A673 (cell line): ENCODE measurements at regions of chrX and their contacts with region 1.

Region 1: GRCh38 chrX:9700555-9700954 is 65.1 kb downstream of the GPR143 start:
- DNase-seq: no peak
- H3K4me3 ChIP-seq: no peak overlapping the region
- H3K27ac ChIP-seq: no peak overlapping the region
- H3K4me1 ChIP-seq: no peaks in the 10 kb centered on the region
- H3K27me3 ChIP-seq: no peaks in the 10 kb centered on the region
- CTCF ChIP-seq: 0 out of 2 replicates have a peak, but pooled peaks have one; percentile 18

Region 2: DNA sequence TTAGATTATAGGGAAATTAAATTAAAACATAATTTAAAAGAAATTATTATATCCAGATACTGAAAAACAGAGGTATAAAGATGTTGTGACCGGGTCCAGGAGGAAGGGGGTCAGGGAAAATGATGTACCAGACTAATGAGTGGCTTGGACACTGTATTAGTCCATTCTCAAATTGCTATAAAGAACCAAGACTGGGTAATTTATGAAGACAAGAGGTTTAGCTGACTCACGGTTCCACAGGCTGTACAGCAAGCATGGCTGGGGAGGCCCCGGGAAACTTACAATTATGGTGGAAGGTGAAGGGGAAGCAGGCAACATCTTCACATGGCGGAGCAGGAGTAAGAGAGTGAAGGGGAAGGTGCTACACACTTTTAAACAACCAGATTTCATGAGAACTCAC is 663.3 kb before region 1 on chrX:
- CTCF ChIA-PET with region 1: no interaction called
- POLR2A ChIA-PET with region 1: interaction called, 11 read pairs
- intact Hi-C with region 1: no loop called
- DNase-seq: no peak
- H3K4me3 ChIP-seq: no peak overlapping the region
- H3K27ac ChIP-seq: no peak overlapping the region
- H3K4me1 ChIP-seq: no peaks in the 10 kb centered on the region
- H3K27me3 ChIP-seq: no peaks in the 10 kb centered on the region
- CTCF ChIP-seq: no peak

Region 3: DNA sequence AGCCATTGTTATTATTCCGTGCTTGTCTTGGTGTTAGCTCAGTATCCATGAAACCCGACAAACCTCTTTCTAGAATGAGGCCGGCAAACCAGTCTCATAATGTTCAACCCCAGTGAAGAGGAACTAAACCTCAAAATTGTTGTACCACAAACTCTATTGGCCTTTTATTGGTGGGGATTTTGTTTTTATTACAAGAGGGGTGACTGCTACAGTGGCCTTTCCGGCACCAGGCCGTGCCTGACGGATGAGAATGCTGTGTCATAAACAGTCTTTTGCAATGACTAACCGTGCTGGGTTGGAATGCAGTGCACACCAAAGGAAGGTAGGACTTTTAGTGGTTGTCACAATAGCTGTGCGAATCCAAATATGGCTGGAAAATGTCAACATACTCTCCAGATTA is 146.5 kb after region 1 on chrX:
- CTCF ChIA-PET with region 1: no interaction called
- POLR2A ChIA-PET with region 1: no interaction called
- intact Hi-C with region 1: no loop called
- DNase-seq: no peak
- H3K4me3 ChIP-seq: no peak overlapping the region
- H3K27ac ChIP-seq: no peak overlapping the region
- H3K4me1 ChIP-seq: no peaks in the 10 kb centered on the region
- H3K27me3 ChIP-seq: no peaks in the 10 kb centered on the region
- CTCF ChIP-seq: no peak